Caco-2 (cell line): ENCODE measurements at regions of chr10 and their contacts with region 1.

Region 1: GRCh38 chr10:112394475-112394875 is 20.6 kb downstream of the ACSL5 start:
- DNase-seq: peak; percentile 70 to 82
- H3K4me3 ChIP-seq: no peak overlapping the region
- H3K4me3 Mint-ChIP-seq: no peak overlapping the region
- H3K27ac Mint-ChIP-seq: no peak overlapping the region
- H3K4me1 ChIP-seq: peaks cover 63% of the 10 kb centered on the region
- H3K4me1 Mint-ChIP-seq: peaks cover 23% of the 10 kb centered on the region
- H3K27me3 ChIP-seq: no peaks in the 10 kb centered on the region
- H3K27me3 Mint-ChIP-seq: no peaks in the 10 kb centered on the region
- CTCF ChIP-seq: no peak

Region 2: GRCh38 chr10:112332509-112333228 is 61.8 kb before region 1 on chr10:
- CTCF ChIA-PET with region 1: no interaction called
- POLR2A ChIA-PET with region 1: no interaction called
- intact Hi-C with region 1: no loop called
- DNase-seq: no peak
- H3K4me3 ChIP-seq: no peak overlapping the region
- H3K4me3 Mint-ChIP-seq: no peak overlapping the region
- H3K27ac Mint-ChIP-seq: no peak overlapping the region
- H3K4me1 ChIP-seq: peaks cover 26% of the 10 kb centered on the region
- H3K4me1 Mint-ChIP-seq: peaks cover 24% of the 10 kb centered on the region
- H3K27me3 ChIP-seq: no peaks in the 10 kb centered on the region
- H3K27me3 Mint-ChIP-seq: no peaks in the 10 kb centered on the region
- CTCF ChIP-seq: no peak

Region 3: DNA sequence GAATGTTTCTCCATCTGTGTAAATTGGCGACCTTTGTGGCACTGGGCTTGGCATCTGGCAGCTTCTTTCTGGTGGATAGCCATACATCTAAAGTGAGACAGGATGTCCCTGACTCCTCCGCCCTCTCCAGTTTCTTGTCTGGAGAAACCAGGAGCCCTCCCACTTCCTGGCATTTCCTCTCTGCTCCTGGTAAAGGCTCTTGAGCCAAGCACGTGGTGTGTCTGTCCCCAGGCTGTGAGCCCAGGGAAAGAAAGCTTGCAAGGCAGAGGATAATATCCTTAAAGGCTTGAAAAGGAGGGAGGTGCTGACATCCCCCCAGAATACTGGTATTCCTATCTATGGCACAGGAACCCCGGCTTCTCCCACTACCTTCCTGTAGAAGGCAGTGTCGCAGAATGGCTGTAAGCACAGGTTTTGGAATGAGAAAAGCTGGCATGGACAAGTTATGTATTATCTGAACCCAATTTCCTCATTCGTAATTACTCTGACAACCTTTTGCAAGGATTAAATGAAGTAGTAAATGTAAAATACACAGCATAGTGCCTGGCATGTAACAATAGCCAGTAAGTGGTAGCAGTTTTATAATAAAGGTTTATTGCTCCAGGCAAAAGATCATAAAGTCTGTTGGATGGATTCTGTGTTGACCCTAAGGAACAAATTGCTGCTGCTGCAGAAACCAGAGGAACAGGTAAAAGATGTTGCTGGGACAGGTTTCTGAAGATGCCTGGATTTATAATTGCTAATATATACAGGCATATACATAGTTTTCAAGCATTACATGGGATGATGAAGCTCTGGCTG is 32.3 kb before region 1 on chr10:
- CTCF ChIA-PET with region 1: interaction called, 3 read pairs
- POLR2A ChIA-PET with region 1: no interaction called
- intact Hi-C with region 1: loop called (anchors 5 kb)
- DNase-seq: peak in 1 of 2 experiments; percentile 23
- H3K4me3 ChIP-seq: no peak overlapping the region
- H3K4me3 Mint-ChIP-seq: no peak overlapping the region
- H3K27ac Mint-ChIP-seq: no peak overlapping the region
- H3K4me1 ChIP-seq: peaks cover 63% of the 10 kb centered on the region
- H3K4me1 Mint-ChIP-seq: peaks cover 31% of the 10 kb centered on the region
- H3K27me3 ChIP-seq: no peaks in the 10 kb centered on the region
- H3K27me3 Mint-ChIP-seq: no peaks in the 10 kb centered on the region
- CTCF ChIP-seq: peak in 1 of 2 experiments; percentile 23

Region 4: DNA sequence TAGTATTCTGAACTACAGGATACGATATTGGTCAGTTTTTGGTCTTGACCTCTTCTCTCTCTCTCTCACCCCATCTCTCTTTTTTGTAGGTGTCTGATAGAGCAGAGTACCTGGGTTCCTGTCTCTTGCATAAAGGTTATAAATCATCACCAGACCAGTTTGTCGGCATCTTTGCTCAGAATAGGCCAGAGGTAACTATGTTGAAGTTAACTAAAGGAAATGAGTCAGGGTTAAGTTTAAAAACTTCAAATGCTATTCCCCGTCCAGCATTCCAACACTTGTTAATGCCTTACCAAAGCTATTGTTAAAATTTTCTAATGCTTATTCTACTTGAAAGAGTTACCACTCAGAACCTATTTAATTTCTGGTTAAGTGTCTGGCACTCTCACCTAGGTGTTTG is 10.1 kb after region 1 on chr10:
- CTCF ChIA-PET with region 1: no interaction called
- POLR2A ChIA-PET with region 1: no interaction called
- intact Hi-C with region 1: loop called (anchors 1 kb)
- DNase-seq: peak in 1 of 2 experiments; percentile 30
- H3K4me3 ChIP-seq: no peak overlapping the region
- H3K4me3 Mint-ChIP-seq: no peak overlapping the region
- H3K27ac Mint-ChIP-seq: no peak overlapping the region
- H3K4me1 ChIP-seq: peaks cover 21% of the 10 kb centered on the region
- H3K4me1 Mint-ChIP-seq: peaks cover 28% of the 10 kb centered on the region
- H3K27me3 ChIP-seq: no peaks in the 10 kb centered on the region
- H3K27me3 Mint-ChIP-seq: no peaks in the 10 kb centered on the region
- CTCF ChIP-seq: no peak